A549 (cell line): ENCODE measurements at regions of chr16 and their contacts with region 1.

Region 1: DNA sequence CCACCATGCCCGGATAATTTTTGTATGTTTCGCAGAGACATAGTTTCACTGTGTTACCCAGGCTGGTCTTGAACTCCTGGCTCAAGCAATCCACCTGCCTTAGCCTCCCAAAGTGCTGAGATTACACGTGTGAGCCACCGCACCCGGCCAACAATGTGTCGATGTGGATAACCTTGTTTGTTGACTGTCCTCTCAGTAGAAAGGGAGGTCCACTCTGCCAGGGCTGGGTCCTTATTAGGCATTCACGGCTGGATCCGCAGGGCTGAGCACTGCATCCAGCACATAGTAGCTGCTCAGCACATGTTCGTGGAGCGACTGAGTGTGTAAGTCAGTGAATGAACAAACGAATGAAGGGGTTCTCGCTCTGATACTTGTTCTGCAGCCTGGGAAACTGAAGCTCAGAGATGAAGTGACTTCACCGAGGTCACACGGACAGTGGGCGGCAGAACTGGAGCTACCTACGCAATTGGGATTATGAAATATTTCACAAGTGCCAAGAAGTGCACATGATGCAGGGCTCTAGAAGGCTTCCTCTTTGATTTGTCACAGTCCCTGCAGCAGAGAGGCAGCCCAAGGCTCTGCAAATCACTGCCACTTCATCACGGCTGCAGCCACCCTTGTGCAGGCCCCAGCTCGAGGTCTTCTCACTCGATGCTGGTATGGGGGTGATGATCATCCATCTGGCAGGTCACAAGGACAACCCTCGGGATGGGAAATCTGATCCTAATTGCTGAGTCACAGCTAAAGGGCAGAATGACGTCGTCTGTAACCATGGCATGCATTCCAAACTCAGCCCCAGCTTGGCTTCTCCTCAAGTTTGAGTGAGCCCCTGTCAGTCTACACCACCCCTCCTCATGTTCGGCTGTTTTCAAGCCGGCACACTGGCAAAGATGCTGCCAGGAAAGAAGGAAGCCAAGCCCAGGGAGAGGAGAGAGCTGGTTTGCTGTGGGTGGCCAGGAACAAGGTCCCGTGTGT is 28.0 kb upstream of the SNN start:
- DNase-seq: peak; percentile 94 to 100
- ATAC-seq: peak; percentile 91 to 94
- H3K4me3 ChIP-seq: peak overlapping the region; percentile 32
- H3K27ac ChIP-seq: peak overlapping the region; percentile 99 to 100
- H3K4me1 ChIP-seq: peaks cover 57% of the 10 kb centered on the region
- CTCF ChIP-seq: no peak; the same call in 2 of the 3 replicates
- EP300 ChIP-seq: peak; percentile 97 to 98; a peak in 4 of 5 replicates
- POLR2A ChIP-seq: peak; percentile 43
- RAD21 ChIP-seq: peak; percentile 12 to 67; a peak in 4 of 5 replicates

Region 2: GRCh38 chr16:11407047-11407982 is 232.9 kb before region 1 on chr16:
- CTCF ChIA-PET with region 1: interaction called, 65 read pairs
- POLR2A ChIA-PET with region 1: no interaction called
- DNase-seq: peak; percentile 84 to 86
- ATAC-seq: peak; percentile 61 to 80
- H3K4me3 ChIP-seq: no peak overlapping the region
- H3K27ac ChIP-seq: peak overlapping the region; percentile 57 to 77
- H3K4me1 ChIP-seq: peaks cover 35% of the 10 kb centered on the region
- CTCF ChIP-seq: peak; percentile 79
- EP300 ChIP-seq: no peak
- POLR2A ChIP-seq: no peak
- RAD21 ChIP-seq: peak; percentile 93 to 94

Region 3: GRCh38 chr16:11497851-11498289 is 142.3 kb before region 1 on chr16:
- CTCF ChIA-PET with region 1: interaction called, 7 read pairs
- POLR2A ChIA-PET with region 1: interaction called, 11 read pairs
- DNase-seq: peak in 1 of 2 experiments; percentile 81
- ATAC-seq: peak in 1 of 2 experiments; percentile 38; a peak in 3 of 6 replicates
- H3K4me3 ChIP-seq: no peak overlapping the region
- H3K27ac ChIP-seq: peak overlapping the region; percentile 88 to 89
- H3K4me1 ChIP-seq: peaks cover 59% of the 10 kb centered on the region
- CTCF ChIP-seq: no peak
- EP300 ChIP-seq: no peak
- POLR2A ChIP-seq: no peak
- RAD21 ChIP-seq: no peak

Region 4: GRCh38 chr16:11530171-11530940 is 109.9 kb before region 1 on chr16:
- CTCF ChIA-PET with region 1: interaction called, 10 read pairs
- POLR2A ChIA-PET with region 1: no interaction called
- DNase-seq: peak in 1 of 2 experiments; percentile 59
- ATAC-seq: peak; percentile 22 to 45; a peak in 4 of 6 replicates
- H3K4me3 ChIP-seq: no peak overlapping the region
- H3K27ac ChIP-seq: peak overlapping the region; percentile 60 to 80
- H3K4me1 ChIP-seq: peaks cover 38% of the 10 kb centered on the region
- CTCF ChIP-seq: no peak
- EP300 ChIP-seq: no peak; a peak in 1 of 5 replicates
- POLR2A ChIP-seq: no peak
- RAD21 ChIP-seq: no peak

Region 5: GRCh38 chr16:11586856-11587642 is 53.2 kb before region 1 on chr16 and contains the start of gene LITAF:
- CTCF ChIA-PET with region 1: interaction called, 21 read pairs
- POLR2A ChIA-PET with region 1: interaction called, 57 read pairs
- DNase-seq: peak; percentile 55 to 67
- ATAC-seq: peak; percentile 85 to 90
- H3K4me3 ChIP-seq: peak within 1 kb of the TSS; percentile 93
- H3K27ac ChIP-seq: peak within 1 kb of the TSS; percentile 99 to 100
- H3K4me1 ChIP-seq: peaks cover 38% of the 10 kb centered on the region
- CTCF ChIP-seq: no peak; the same call in 2 of the 3 replicates
- EP300 ChIP-seq: no peak
- POLR2A ChIP-seq: peak; percentile 58
- RAD21 ChIP-seq: no peak; a peak in 2 of 5 replicates
- polyA plus RNA-seq, gene LITAF: 197 and 216 TPM in 2 replicates

Region 6: DNA sequence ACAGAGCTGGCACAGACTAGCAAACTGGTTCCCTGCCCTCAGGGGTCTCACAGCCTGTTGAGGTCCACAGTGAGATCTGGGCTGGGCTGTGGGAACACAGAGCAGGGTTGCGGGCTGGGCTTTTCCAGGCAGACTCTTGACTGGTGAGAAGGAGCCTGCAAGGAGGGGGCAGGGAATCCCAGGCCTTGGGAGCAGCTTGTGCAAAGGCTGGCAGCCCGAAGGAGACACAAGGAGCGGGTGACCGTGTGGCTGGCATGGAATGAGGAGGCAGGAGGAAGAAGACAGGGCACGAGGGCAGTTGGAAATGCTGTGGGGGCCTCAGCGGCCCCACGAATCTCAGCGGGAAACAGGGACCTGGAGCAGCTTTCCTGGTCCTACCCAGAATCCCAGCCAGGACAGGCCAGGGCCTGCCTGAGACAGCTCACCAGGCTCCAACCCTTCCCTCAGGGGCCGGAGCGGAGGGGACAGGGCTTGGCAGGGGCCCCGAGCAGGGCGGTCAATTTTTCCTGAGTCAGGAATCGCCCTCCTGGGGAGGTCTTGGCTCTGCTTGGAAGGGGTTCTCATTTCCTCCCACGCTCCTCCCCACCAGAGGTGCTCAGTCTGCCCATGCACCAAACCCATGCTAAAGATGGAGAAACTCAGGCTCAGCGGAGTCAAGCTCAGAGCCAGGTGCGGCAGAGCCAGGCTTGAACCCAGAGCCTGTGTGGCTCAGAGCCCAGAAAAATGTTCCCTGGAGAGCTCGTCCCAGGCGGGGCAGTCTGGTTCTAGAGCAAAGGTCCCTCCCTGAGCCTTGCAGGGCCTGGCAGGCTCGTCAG is 18.9 kb after region 1 on chr16:
- CTCF ChIA-PET with region 1: interaction called, 23 read pairs
- POLR2A ChIA-PET with region 1: interaction called, 4 read pairs
- DNase-seq: no peak
- ATAC-seq: peak in 1 of 2 experiments; percentile 29; a peak in 2 of 6 replicates
- H3K4me3 ChIP-seq: no peak overlapping the region
- H3K27ac ChIP-seq: peak overlapping the region; percentile 56 to 76; a peak in 5 of 6 replicates
- H3K4me1 ChIP-seq: peaks cover 10% of the 10 kb centered on the region; the same call in 2 of the 3 replicates
- CTCF ChIP-seq: no peak
- EP300 ChIP-seq: no peak
- POLR2A ChIP-seq: no peak
- RAD21 ChIP-seq: no peak

Region 7: GRCh38 chr16:11742539-11743307 is 102.5 kb after region 1 on chr16 and contains the start of gene TXNDC11:
- CTCF ChIA-PET with region 1: interaction called, 5 read pairs
- POLR2A ChIA-PET with region 1: interaction called, 14 read pairs
- DNase-seq: peak; percentile 85 to 99
- ATAC-seq: peak; percentile 94 to 95
- H3K4me3 ChIP-seq: peak within 1 kb of the TSS; percentile 87
- H3K27ac ChIP-seq: peak within 1 kb of the TSS; percentile 91 to 97
- H3K4me1 ChIP-seq: peaks cover 33% of the 10 kb centered on the region
- CTCF ChIP-seq: no peak
- EP300 ChIP-seq: no peak
- POLR2A ChIP-seq: peak; percentile 96
- RAD21 ChIP-seq: no peak
- polyA plus RNA-seq, gene TXNDC11: 42.4 and 45.1 TPM in 2 replicates

Region 8: GRCh38 chr16:11806721-11807120 is 166.5 kb after region 1 on chr16:
- CTCF ChIA-PET with region 1: no interaction called
- POLR2A ChIA-PET with region 1: no interaction called
- DNase-seq: no peak
- ATAC-seq: no peak
- H3K4me3 ChIP-seq: no peak overlapping the region
- H3K27ac ChIP-seq: no peak overlapping the region
- H3K4me1 ChIP-seq: peaks cover 1% of the 10 kb centered on the region; the same call in 2 of the 3 replicates
- CTCF ChIP-seq: no peak
- EP300 ChIP-seq: no peak
- POLR2A ChIP-seq: no peak
- RAD21 ChIP-seq: no peak